ENCODE measurements at regions of chr2 and their contacts with region 1.

Region 1: GRCh38 chr2:173793709-173794565 is 171.2 kb downstream of the SP3 start:
- DNase-seq: peak; percentile 8 to 36
- H3K4me3 ChIP-seq: no peak overlapping the region
- H3K4me3 Mint-ChIP-seq: no peak overlapping the region
- H3K27ac Mint-ChIP-seq: no peak overlapping the region
- H3K4me1 ChIP-seq: no peaks in the 10 kb centered on the region
- H3K4me1 Mint-ChIP-seq: no peaks in the 10 kb centered on the region
- H3K27me3 ChIP-seq: peaks cover 2% of the 10 kb centered on the region; the same call in 1 of the 2 replicates
- H3K27me3 Mint-ChIP-seq: peaks cover 6% of the 10 kb centered on the region
- CTCF ChIP-seq: no peak

Region 2: DNA sequence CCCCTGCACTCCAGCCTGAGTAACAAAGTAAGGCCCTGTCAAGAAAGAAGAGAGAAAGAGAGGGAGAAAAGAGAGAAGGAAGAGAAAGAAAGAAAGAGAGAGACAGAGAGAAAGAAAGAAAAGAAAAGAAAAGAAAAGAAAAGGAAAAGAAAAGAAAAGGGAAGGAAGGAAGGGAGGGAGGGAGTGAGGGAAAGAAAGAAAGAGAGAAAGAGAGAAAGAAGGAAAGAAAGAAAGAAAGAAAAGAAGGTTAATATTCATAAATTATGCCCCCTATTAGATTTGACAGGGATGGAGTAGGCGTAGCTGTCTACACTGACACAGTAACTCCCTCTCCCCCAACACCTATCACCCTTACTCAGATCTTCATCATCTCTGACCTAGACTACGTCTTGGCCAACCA is 31.1 kb before region 1 on chr2:
- CTCF ChIA-PET with region 1: no interaction called
- POLR2A ChIA-PET with region 1: interaction called, 15 read pairs
- intact Hi-C with region 1: no loop called
- DNase-seq: no peak
- H3K4me3 ChIP-seq: no peak overlapping the region
- H3K4me3 Mint-ChIP-seq: no peak overlapping the region
- H3K27ac Mint-ChIP-seq: no peak overlapping the region
- H3K4me1 ChIP-seq: no peaks in the 10 kb centered on the region
- H3K4me1 Mint-ChIP-seq: no peaks in the 10 kb centered on the region
- H3K27me3 ChIP-seq: no peaks in the 10 kb centered on the region
- H3K27me3 Mint-ChIP-seq: no peaks in the 10 kb centered on the region
- CTCF ChIP-seq: no peak

Region 3: GRCh38 chr2:174325373-174326160 is 531.6 kb after region 1 on chr2:
- CTCF ChIA-PET with region 1: no interaction called
- POLR2A ChIA-PET with region 1: no interaction called
- intact Hi-C with region 1: no loop called
- DNase-seq: no peak
- H3K4me3 ChIP-seq: peak overlapping the region; percentile 55
- H3K4me3 Mint-ChIP-seq: peak overlapping the region; percentile 78
- H3K27ac Mint-ChIP-seq: no peak overlapping the region
- H3K4me1 ChIP-seq: 0 out of 2 replicates have a peak, but pooled peaks cover 2% of the 10 kb centered on the region
- H3K4me1 Mint-ChIP-seq: peaks cover 11% of the 10 kb centered on the region
- H3K27me3 ChIP-seq: no peaks in the 10 kb centered on the region
- H3K27me3 Mint-ChIP-seq: peaks cover 10% of the 10 kb centered on the region
- CTCF ChIP-seq: no peak